MCF 10A (cell line): ENCODE measurements at regions of chr2 and their contacts with region 1.

Region 1: GRCh38 chr2:1972422-1972821 is 228.1 kb upstream of the PXDN start:
- DNase-seq: peak; percentile 99
- H3K4me3 Mint-ChIP-seq: no peak overlapping the region
- H3K27ac Mint-ChIP-seq: no peak overlapping the region
- H3K4me1 Mint-ChIP-seq: peaks cover 32% of the 10 kb centered on the region
- H3K27me3 Mint-ChIP-seq: no peaks in the 10 kb centered on the region
- CTCF ChIP-seq: no peak

Region 2: DNA sequence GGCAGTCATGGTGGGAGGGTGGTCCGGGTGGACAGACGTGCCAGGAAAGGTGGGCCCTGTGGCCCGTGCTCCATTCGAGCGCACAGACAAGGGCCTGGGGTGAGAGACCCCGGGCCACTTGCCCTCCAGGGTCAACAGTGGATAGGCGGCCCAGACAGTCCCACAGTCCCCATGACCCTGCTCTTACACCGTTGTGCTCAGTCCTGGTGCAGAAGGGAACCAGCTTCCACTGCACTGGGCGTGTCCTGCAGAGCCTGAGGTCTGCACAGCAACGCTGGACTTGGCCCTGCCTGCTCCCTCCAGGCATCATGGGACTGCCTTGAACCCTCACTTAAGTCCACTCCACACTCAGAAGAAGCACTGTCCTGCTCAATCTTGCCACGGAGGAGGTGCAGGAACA is 280.1 kb before region 1 on chr2:
- CTCF ChIA-PET with region 1: no interaction called
- POLR2A ChIA-PET with region 1: no interaction called
- intact Hi-C with region 1: no loop called
- DNase-seq: no peak
- H3K4me3 Mint-ChIP-seq: no peak overlapping the region
- H3K27ac Mint-ChIP-seq: no peak overlapping the region
- H3K4me1 Mint-ChIP-seq: peaks cover 16% of the 10 kb centered on the region
- H3K27me3 Mint-ChIP-seq: no peaks in the 10 kb centered on the region
- CTCF ChIP-seq: no peak

Region 3: DNA sequence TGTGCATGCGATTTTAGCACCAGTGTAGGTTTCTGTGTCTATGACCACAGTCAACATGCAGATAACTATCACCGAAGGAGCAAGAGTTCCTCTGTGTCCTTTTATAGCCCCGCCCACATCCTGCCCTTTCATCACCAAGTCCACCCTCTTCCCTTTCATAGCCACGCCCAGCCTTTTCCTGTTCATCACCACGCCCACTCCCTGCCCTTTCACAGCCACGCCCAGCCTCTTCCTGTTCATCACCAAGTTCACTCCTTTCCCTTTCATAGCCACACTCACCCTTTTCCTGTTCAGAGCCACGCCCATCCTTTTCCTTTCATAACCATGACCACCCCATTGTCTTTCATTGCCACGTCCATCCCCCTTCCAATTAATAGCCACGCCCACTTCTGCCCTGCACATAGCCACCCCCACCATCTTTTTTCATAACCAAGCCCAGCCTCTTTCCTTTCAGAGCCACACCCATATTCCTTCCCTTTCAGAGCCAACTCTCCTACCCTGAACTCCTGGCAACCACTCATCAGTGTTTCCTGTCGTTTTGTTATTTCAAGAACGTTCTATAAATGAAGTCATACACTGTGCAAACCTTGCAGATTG is 84.8 kb after region 1 on chr2:
- CTCF ChIA-PET with region 1: no interaction called
- POLR2A ChIA-PET with region 1: no interaction called
- intact Hi-C with region 1: loop called (anchors 10 kb)
- DNase-seq: peak; percentile 91
- H3K4me3 Mint-ChIP-seq: no peak overlapping the region
- H3K27ac Mint-ChIP-seq: peak overlapping the region; percentile 10
- H3K4me1 Mint-ChIP-seq: peaks cover 15% of the 10 kb centered on the region
- H3K27me3 Mint-ChIP-seq: no peaks in the 10 kb centered on the region
- CTCF ChIP-seq: no peak